OCI-LY7 (cell line): ENCODE measurements at regions of chr2 and their contacts with region 1.

Region 1: DNA sequence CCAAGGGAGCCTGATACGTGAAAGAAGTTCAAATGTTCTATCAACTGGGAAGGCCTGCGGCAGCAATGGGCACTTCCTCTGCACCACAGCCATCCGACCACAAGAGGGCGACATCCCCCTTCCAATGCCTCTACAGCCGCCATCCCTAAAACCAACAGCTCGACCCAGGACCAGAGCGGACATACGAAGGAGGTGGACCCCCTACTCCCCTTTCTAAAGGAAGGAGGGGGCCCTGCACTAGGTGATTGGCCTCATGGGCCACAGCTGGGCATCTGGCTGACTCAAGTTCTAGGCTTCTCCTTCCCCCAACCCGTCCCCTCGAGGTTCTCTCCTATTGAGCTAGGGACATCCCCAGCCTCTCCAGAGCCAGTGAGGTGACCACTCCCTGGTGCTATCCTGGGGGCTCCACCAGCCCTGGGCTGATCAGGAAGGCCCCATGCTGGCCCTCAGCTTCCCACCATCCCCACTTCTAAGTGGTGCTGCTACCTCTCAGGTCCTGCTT is 217.2 kb downstream of the TNS1 start:
- DNase-seq: peak; percentile 43
- H3K4me3 ChIP-seq: no peak overlapping the region
- H3K27ac ChIP-seq: no peak overlapping the region
- H3K4me1 ChIP-seq: no peaks in the 10 kb centered on the region
- CTCF ChIP-seq: peak; percentile 89

Region 2: GRCh38 chr2:217886720-217887309 is 101.2 kb after region 1 on chr2:
- CTCF ChIA-PET with region 1: interaction called, 6 read pairs
- POLR2A ChIA-PET with region 1: no interaction called
- intact Hi-C with region 1: loop called (anchors 1 kb)
- DNase-seq: peak; percentile 70
- H3K4me3 ChIP-seq: no peak overlapping the region
- H3K27ac ChIP-seq: no peak overlapping the region
- H3K4me1 ChIP-seq: no peaks in the 10 kb centered on the region
- CTCF ChIP-seq: peak; percentile 85

Region 3: GRCh38 chr2:217988014-217988839 is 202.6 kb after region 1 on chr2:
- CTCF ChIA-PET with region 1: interaction called, 3 read pairs
- POLR2A ChIA-PET with region 1: no interaction called
- intact Hi-C with region 1: loop called (anchors 1 kb)
- DNase-seq: peak; percentile 58
- H3K4me3 ChIP-seq: no peak overlapping the region
- H3K27ac ChIP-seq: no peak overlapping the region
- H3K4me1 ChIP-seq: no peaks in the 10 kb centered on the region
- CTCF ChIP-seq: peak; percentile 85

Region 4: GRCh38 chr2:218066926-218067515 is 281.4 kb after region 1 on chr2:
- CTCF ChIA-PET with region 1: interaction called, 3 read pairs
- POLR2A ChIA-PET with region 1: no interaction called
- intact Hi-C with region 1: loop called (anchors 2 kb)
- DNase-seq: no peak
- H3K4me3 ChIP-seq: no peak overlapping the region
- H3K27ac ChIP-seq: no peak overlapping the region
- H3K4me1 ChIP-seq: no peaks in the 10 kb centered on the region
- CTCF ChIP-seq: no peak